ENCODE measurements at regions of chr3 and their contacts with region 1.

Region 1: DNA sequence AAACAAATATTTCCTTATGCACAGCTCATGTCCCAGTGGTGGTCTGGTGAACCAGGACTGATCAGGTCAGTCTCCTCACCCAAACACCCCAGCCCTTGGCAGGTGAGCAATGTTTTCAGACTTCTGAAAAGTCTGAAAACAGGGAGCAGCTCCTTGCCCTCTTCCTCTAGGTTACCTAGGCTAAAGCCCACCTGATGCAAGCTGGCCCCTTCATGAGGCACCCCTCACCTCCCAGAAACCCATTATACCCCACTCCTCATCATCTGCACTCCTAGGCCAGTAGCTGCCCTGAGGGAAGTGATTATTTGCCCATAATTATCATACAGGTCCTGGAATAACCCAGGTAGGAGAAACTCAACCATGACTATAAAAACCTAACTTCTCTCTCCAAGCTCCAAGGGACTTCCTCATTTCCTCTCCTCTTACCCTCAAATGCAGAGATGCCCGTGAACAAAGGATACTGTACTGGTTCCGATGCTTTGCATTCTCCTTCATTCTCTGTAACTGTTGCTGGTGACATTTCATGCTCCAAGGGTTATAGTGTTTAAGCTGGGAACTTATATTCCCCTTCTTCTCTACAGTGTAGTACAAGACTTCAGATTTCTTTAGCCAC is 5.2 kb upstream of the NCKIPSD start:
- DNase-seq: no peak
- H3K4me3 ChIP-seq: no peak overlapping the region
- H3K4me3 Mint-ChIP-seq: no peak overlapping the region
- H3K27ac Mint-ChIP-seq: peak overlapping the region; percentile 50
- H3K4me1 ChIP-seq: no peaks in the 10 kb centered on the region
- H3K4me1 Mint-ChIP-seq: peaks cover 7% of the 10 kb centered on the region
- H3K27me3 ChIP-seq: no peaks in the 10 kb centered on the region
- H3K27me3 Mint-ChIP-seq: no peaks in the 10 kb centered on the region
- CTCF ChIP-seq: no peak

Region 2: DNA sequence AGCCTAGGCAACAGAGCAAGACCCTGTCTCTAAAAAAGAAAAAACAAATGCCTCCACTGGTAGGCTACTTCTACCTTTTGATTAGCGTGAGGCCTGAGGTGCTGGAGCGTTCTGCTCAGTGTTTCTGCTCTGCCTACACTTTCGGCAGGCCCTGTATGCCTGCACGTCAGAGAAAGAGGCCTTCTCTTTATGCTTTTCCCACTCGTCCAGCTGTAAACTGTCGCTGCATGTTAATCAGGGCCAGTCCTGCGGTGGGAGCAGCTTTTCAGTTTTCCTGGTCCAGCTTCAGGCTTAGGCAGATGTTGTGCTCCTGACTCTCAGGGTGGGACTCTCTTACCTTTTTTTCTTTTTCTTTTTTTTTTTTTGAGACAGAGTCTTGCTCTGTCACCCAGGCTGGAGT is 1137.5 kb before region 1 on chr3:
- CTCF ChIA-PET with region 1: no interaction called
- POLR2A ChIA-PET with region 1: interaction called, 11 read pairs
- intact Hi-C with region 1: no loop called
- DNase-seq: no peak
- H3K4me3 ChIP-seq: no peak overlapping the region
- H3K4me3 Mint-ChIP-seq: no peak overlapping the region
- H3K27ac Mint-ChIP-seq: no peak overlapping the region
- H3K4me1 ChIP-seq: no peaks in the 10 kb centered on the region
- H3K4me1 Mint-ChIP-seq: no peaks in the 10 kb centered on the region
- H3K27me3 ChIP-seq: no peaks in the 10 kb centered on the region
- H3K27me3 Mint-ChIP-seq: peaks cover 3% of the 10 kb centered on the region
- CTCF ChIP-seq: no peak

Region 3: DNA sequence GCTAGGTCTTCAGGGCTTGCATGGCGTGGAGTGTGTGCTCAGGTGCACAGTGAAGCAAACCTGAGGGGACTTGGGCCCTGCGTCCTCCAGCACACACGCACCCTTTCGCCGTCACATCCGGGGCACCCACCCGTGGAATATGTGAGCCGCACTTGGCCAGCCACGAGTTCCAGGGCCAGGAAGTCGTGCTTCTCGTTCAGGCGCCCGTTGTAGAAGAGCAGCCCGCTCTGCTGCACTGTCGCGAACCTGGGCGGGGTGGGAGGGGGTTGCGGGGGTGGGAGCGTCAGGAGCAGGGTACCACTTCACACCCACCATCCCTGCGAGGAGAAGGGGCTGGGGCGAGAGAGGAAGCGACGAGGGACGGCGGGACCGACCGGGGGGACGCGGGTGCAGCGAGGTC is 35.3 kb before region 1 on chr3:
- CTCF ChIA-PET with region 1: no interaction called
- POLR2A ChIA-PET with region 1: no interaction called
- intact Hi-C with region 1: no loop called
- DNase-seq: no peak
- H3K4me3 ChIP-seq: no peak overlapping the region
- H3K4me3 Mint-ChIP-seq: no peak overlapping the region
- H3K27ac Mint-ChIP-seq: no peak overlapping the region
- H3K4me1 ChIP-seq: no peaks in the 10 kb centered on the region
- H3K4me1 Mint-ChIP-seq: no peaks in the 10 kb centered on the region
- H3K27me3 ChIP-seq: no peaks in the 10 kb centered on the region
- H3K27me3 Mint-ChIP-seq: no peaks in the 10 kb centered on the region
- CTCF ChIP-seq: no peak

Region 4: DNA sequence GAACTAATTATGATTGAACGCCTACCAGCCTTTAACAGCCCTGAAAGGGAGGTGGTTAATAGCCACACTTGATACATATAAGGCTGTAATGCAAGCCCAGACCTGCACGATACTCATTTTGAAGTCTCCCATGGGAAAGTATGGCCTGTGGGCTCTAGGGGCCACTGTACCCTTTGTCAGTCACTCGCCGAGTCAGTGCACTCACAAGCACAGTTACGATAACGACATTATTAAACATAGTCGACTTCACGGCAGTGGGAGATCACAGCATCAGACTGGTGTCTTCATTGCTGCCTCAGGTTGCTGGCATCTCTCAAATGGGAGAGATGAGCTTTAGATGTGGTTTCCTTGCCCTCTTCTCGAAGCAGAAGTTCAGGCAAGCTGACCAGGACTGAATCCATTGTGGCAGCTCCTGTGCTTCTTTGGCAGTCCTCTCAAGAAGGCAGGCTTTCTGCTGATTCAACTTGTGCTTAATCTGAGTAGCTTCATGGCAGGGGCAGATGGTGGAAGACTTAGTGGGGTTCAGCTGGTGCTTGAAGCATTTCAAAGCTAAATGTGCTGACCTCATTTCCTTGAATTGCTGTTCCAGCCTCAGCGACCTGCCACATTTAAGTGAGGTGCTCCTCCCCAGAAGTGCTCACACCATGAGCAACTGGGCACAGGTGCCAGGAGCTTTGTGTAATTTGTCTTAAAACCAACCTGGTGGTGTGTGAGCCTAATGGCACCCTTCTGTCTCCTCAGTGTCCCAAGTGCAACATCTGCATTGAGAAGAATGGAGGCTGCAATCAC is 283.3 kb after region 1 on chr3:
- CTCF ChIA-PET with region 1: no interaction called
- POLR2A ChIA-PET with region 1: no interaction called
- intact Hi-C with region 1: no loop called
- DNase-seq: no peak
- H3K4me3 ChIP-seq: no peak overlapping the region
- H3K4me3 Mint-ChIP-seq: no peak overlapping the region
- H3K27ac Mint-ChIP-seq: no peak overlapping the region
- H3K4me1 ChIP-seq: no peaks in the 10 kb centered on the region
- H3K4me1 Mint-ChIP-seq: no peaks in the 10 kb centered on the region
- H3K27me3 ChIP-seq: no peaks in the 10 kb centered on the region
- H3K27me3 Mint-ChIP-seq: no peaks in the 10 kb centered on the region
- CTCF ChIP-seq: no peak